Activated B cell treated with CpG ODN at 0.5 μM for 24 hours (primary cell): ENCODE measurements at regions of chr1 and their contacts with region 1.

Region 1: DNA sequence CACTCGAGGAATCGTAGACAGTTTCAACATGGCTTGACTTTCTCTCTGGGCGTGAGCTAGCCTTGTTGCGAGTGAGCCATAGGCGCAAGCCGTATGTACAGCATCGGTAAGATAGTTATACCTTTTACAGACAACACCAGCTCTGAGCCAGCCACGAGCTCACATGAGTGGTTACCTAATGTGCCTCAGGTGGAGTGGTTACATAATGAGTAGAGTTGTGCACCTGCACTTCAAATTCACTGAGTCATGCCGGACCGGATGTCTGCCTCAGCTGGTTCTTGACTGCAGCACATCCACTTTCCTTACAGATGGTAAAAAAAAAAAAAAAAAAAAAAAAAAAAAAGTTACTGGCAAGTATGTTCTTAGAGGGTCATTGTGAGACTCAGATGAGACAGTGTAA is 360.4 kb upstream of the NR5A2 start:
- DNase-seq: no peak
- ATAC-seq: no peak
- H3K4me3 Mint-ChIP-seq: no peak overlapping the region
- H3K27ac Mint-ChIP-seq: no peak overlapping the region
- H3K4me1 Mint-ChIP-seq: no peaks in the 10 kb centered on the region
- H3K27me3 Mint-ChIP-seq: peaks cover 8% of the 10 kb centered on the region
- CTCF ChIP-seq: no peak

Region 2: DNA sequence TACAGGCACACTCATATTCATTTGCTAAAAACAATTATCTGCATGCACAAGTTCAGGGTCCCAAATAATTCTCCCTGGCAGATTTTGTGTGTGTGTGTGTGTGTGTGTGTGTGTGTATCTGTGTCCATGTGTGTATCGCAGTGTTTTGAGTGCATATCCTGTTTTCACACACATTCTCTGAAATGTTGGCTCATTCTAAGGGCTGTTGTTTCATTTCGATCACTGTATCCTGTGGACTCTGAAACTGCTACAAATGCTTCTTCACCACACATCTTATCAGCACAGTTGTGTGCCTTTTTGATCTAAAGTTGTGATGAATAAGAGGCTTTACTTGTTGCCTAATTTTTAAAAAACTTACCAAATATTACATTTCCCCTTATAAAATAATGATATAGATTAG is 395.1 kb after region 1 on chr1:
- CTCF ChIA-PET with region 1: no interaction called
- POLR2A ChIA-PET with region 1: interaction called, 19 read pairs
- intact Hi-C with region 1: no loop called
- DNase-seq: no peak
- ATAC-seq: no peak
- H3K4me3 Mint-ChIP-seq: no peak overlapping the region
- H3K27ac Mint-ChIP-seq: no peak overlapping the region
- H3K4me1 Mint-ChIP-seq: no peaks in the 10 kb centered on the region
- H3K27me3 Mint-ChIP-seq: peaks cover 34% of the 10 kb centered on the region
- CTCF ChIP-seq: no peak